ENCODE measurements at regions of chr4 and their contacts with region 1.

Region 1: GRCh38 chr4:140861359-140862176 is 105.4 kb upstream of the TBC1D9 start:
- DNase-seq: peak; percentile 11
- H3K4me3 Mint-ChIP-seq: no peak overlapping the region
- H3K27ac Mint-ChIP-seq: no peak overlapping the region
- H3K4me1 Mint-ChIP-seq: peaks cover 2% of the 10 kb centered on the region
- H3K27me3 Mint-ChIP-seq: peaks cover 8% of the 10 kb centered on the region

Region 2: GRCh38 chr4:140884431-140885058 is 23.0 kb after region 1 on chr4:
- intact Hi-C with region 1: loop called (anchors 1 kb)
- DNase-seq: peak; percentile 11
- H3K4me3 Mint-ChIP-seq: no peak overlapping the region
- H3K27ac Mint-ChIP-seq: no peak overlapping the region
- H3K4me1 Mint-ChIP-seq: no peaks in the 10 kb centered on the region
- H3K27me3 Mint-ChIP-seq: peaks cover 1% of the 10 kb centered on the region

Region 3: GRCh38 chr4:141133146-141133998 is 271.8 kb after region 1 on chr4 and contains the start of gene RNF150:
- intact Hi-C with region 1: loop called (anchors 1 kb)
- DNase-seq: peak; percentile 27
- H3K4me3 Mint-ChIP-seq: peak within 1 kb of the TSS; percentile 77
- H3K27ac Mint-ChIP-seq: no peak within 1 kb of the TSS
- H3K4me1 Mint-ChIP-seq: peaks cover 9% of the 10 kb centered on the region
- H3K27me3 Mint-ChIP-seq: peaks cover 72% of the 10 kb centered on the region
- total RNA-seq, gene RNF150: 0.05 TPM in 1 of 2 replicates, not detected in the other

Measured in activated T-helper 2 cell treated with anti-CD3 and anti-CD28 coated beads, Interferon-gamma antibody, Interleukin-2, Interleukin-4, amounts not matched to agents 10 μg/mL and 5 μg/mL and 100 μg/mL, durations not matched to agents 14 hours and 24 hours and 36 hours (primary cell).